Motor neuron (in vitro differentiated cells): ENCODE measurements at regions of chr17 and their contacts with region 1.

Region 1: DNA sequence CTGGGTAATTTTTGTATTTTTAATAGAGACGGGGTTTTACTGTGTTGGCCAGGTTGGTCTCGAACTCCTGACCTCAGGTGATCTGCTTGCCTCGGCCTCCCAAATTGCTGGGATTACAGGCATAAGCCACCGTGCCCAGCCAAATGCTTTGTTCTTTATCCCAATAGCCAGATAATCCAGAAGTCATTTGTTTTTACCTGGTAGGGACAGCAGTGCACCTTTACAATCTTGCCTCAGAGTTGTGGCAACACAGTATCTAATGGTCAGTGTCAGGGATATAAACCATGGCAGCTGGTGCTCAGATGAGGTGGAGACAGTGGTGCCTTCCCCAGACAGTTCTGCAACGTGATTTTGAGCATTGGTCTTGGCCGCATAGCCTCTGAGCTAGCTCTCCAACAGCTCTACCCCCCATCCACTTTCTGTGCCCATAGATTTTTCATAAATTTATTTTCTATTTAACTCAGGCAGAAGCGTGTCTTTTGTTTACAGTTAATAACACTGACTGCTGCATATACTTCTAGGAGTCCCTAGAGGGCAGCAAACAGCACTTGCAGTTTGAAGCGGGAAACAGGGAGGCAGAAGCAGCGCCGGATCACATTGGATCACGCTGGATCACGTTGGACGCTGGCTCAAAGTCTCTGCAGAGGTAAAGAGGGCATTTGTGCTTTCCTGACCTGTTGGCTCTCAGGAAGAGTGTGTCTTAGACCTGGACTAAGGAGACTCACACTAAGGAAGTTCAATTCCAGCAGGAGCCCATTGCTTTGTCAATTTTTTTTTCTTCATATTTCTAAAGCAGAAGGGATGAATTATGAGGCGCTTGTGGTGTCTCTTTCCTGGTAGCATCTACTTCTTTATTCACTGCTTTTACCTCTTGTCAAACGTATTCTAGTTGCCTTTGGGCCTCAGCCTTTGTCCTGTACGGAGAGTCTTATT is 5.1 kb upstream of the GGT6 start:
- ATAC-seq: peak; percentile 78 to 92 (median 84)
- H3K4me3 ChIP-seq: no peak overlapping the region
- H3K27ac ChIP-seq: no peak overlapping the region
- H3K4me1 ChIP-seq: peaks cover 2 to 10% of the 10 kb centered on the region in 2 donors

Region 2: DNA sequence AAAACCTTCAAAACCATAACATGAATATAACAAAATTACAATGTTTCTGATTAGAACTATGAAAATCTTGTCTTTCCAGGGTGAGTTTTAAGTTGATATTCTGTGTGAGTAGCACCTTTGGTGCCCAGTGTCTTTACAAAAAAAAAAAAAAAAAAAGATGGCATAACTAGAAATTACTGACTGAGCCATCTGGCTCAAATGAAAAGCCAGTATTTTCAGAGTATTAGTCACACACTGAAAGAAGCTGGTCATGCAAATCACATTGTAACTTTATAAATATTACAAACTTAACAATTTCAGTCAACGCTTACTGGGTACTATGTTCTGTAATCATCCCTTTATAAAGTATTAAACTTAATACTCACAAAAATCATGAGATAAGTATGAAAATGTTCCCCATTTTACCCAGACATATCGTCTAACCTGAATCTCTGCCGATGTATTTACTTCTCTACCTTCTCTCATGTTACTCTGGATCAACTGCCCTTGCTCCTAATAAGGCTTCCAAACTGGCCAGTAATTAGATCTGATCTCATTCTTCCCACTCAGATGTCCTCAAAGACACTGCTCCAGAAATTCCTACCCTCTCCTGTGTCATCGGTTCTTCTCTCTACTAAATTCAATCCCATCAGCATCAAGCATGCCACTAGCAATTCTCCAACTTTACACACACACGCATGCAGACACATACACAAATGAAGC is 224.4 kb before region 1 on chr17:
- in situ Hi-C with region 1: no loop called
- ATAC-seq: peak in 2 of 8 experiments; percentile 27 to 58
- H3K4me3 ChIP-seq: no peak overlapping the region
- H3K27ac ChIP-seq: no peak overlapping the region
- H3K4me1 ChIP-seq: no peaks in the 10 kb centered on the region

Region 3: GRCh38 chr17:4610162-4610561 is 44.7 kb after region 1 on chr17:
- in situ Hi-C with region 1: loop called in 1 of 9 experiments (anchors 10 kb)
- ATAC-seq: no peak
- H3K4me3 ChIP-seq: no peak overlapping the region
- H3K27ac ChIP-seq: no peak overlapping the region
- H3K4me1 ChIP-seq: peaks cover 13 to 34% of the 10 kb centered on the region in 2 donors

Region 4: GRCh38 chr17:4625181-4625617 is 59.7 kb after region 1 on chr17:
- in situ Hi-C with region 1: loop called in 4 of 9 experiments (anchors 5 to 10 kb)
- ATAC-seq: peak in 4 of 8 experiments; percentile 0 to 73 (median 11)
- H3K4me3 ChIP-seq: no peak overlapping the region
- H3K27ac ChIP-seq: no peak overlapping the region
- H3K4me1 ChIP-seq: peaks cover 0 to 8% of the 10 kb centered on the region in 2 donors